Heart right ventricle (tissue), 16 donors: ENCODE measurements at regions of chr20 and their contacts with region 1.

Region 1: GRCh38 chr20:23143098-23143497 is 57.0 kb upstream of the CD93 start:
- DNase-seq: peak in 1 of 2 donors; percentile 82
- ATAC-seq: peak; percentile 87 to 97 (median 92)
- H3K4me3 ChIP-seq: no peak overlapping the region
- H3K27ac ChIP-seq: peak overlapping the region in 9 of 10 donors; percentile 57 to 95 (median 76)
- H3K4me1 ChIP-seq: peaks cover 10 to 72% (median 34%) of the 10 kb centered on the region in 9 donors
- H3K27me3 ChIP-seq: no peaks in the 10 kb centered on the region
- CTCF ChIP-seq: peak in 1 of 9 donors; percentile 11

Region 2: GRCh38 chr20:22944062-22944461 is 199.0 kb before region 1 on chr20:
- intact Hi-C with region 1: no loop called
- DNase-seq: no peak
- ATAC-seq: no peak
- H3K4me3 ChIP-seq: no peak overlapping the region
- H3K27ac ChIP-seq: no peak overlapping the region
- H3K4me1 ChIP-seq: peaks cover 0 to 4% (median 0%) of the 10 kb centered on the region in 9 donors
- H3K27me3 ChIP-seq: peaks cover 0 to 57% (median 35%) of the 10 kb centered on the region in 7 donors
- CTCF ChIP-seq: no peak

Region 3: DNA sequence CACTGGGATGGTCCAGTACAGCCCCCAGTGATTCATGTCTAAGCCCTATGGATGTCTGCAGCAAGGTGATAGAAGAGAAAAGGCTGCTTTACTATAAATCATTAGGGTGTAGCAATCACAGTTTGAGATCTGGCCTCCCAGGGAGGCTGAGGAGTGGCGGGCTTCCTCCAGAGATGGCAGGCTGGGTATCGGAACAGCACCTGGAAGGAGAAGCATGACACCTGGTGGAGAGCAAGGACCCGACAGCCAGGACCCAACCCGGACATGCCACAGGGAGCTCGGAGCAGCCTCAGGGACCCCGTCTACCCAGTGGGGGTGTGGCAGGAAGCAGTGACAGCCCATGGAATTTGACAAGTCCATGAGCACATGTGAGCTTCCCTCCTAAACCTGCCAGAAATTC is 57.8 kb after region 1 on chr20:
- intact Hi-C with region 1: loop called in 2 of 10 experiments (anchors 5 to 10 kb)
- DNase-seq: peak; percentile 33 to 48
- ATAC-seq: peak in 7 of 8 donors; percentile 33 to 58 (median 38)
- H3K4me3 ChIP-seq: no peak overlapping the region
- H3K27ac ChIP-seq: no peak overlapping the region
- H3K4me1 ChIP-seq: peaks cover 12 to 54% (median 44%) of the 10 kb centered on the region in 9 donors
- H3K27me3 ChIP-seq: no peaks in the 10 kb centered on the region
- CTCF ChIP-seq: peak; percentile 16 to 59 (median 48)

Region 4: GRCh38 chr20:24379484-24379927 is 1236.4 kb after region 1 on chr20:
- intact Hi-C with region 1: no loop called
- DNase-seq: peak; percentile 8 to 20
- ATAC-seq: peak in 5 of 8 donors; percentile 34 to 52 (median 46)
- H3K4me3 ChIP-seq: no peak overlapping the region
- H3K27ac ChIP-seq: no peak overlapping the region
- H3K4me1 ChIP-seq: peaks cover 0 to 10% (median 0%) of the 10 kb centered on the region in 9 donors
- H3K27me3 ChIP-seq: peaks cover 0 to 5% (median 0%) of the 10 kb centered on the region in 7 donors
- CTCF ChIP-seq: no peak